ENCODE measurements at regions of chr12 and their contacts with region 1.

Region 1: GRCh38 chr12:18861287-18861858 is 123.5 kb downstream of the CAPZA3 start:
- DNase-seq: no peak
- H3K4me3 Mint-ChIP-seq: no peak overlapping the region
- H3K27ac Mint-ChIP-seq: no peak overlapping the region
- H3K4me1 Mint-ChIP-seq: no peaks in the 10 kb centered on the region
- H3K27me3 Mint-ChIP-seq: no peaks in the 10 kb centered on the region

Region 2: GRCh38 chr12:19129486-19130223 is 268.3 kb after region 1 on chr12 and contains the start of gene PLEKHA5:
- CTCF ChIA-PET with region 1: no interaction called
- intact Hi-C with region 1: loop called (anchors 5 kb)
- DNase-seq: peak; percentile 37
- H3K4me3 Mint-ChIP-seq: peak within 1 kb of the TSS; percentile 81
- H3K27ac Mint-ChIP-seq: no peak within 1 kb of the TSS
- H3K4me1 Mint-ChIP-seq: peaks cover 16% of the 10 kb centered on the region
- H3K27me3 Mint-ChIP-seq: peaks cover 40% of the 10 kb centered on the region
- total RNA-seq, gene PLEKHA5: 0.69 to 0.81 TPM